Activated CD4-positive, alpha-beta memory T cell treated with anti-CD3 and anti-CD28 coated beads for 36 hours (primary cell): ENCODE measurements at regions of chr6 and their contacts with region 1.

Region 1: DNA sequence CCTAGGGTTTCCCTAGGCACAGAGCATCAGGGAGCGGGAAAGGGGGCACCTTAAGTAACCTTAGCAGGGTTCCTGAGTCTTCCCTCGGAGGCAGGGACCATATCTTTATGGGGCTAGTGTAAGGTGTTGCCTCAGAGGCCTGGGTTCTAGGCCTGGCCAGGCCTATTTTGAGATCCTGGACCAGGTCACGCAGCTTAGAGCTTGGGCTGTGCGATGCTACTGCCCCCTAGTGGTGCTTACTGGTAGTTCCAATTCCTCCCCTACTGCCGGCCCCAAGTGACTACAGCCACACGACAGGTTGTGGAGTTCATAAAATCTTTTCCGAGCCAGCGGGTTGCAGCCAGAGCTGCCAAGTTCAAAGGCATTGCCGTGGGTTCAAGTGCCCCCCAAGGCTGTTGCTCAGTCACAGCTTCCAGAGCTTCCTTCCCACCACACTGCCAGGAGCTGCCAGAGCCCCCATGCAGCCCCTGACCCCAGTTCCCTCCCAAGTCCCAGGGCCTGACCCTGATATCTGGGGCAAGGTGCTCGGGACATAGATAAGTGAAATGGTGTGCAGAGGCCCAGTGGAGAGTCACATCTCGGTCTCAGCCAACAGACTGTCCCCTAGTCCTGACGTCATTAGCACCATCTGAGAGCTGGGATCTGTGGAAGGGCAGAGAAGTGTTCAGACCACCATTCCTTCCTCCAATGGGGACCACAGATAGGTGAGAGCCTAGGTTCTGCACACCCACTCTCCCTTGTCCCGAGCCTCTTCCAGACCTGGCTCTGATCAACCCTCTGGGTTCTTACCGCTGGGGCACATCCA is 3.3 kb downstream of the LRRC73 start:
- DNase-seq: peak; percentile 87
- H3K4me3 Mint-ChIP-seq: no peak overlapping the region
- H3K27ac Mint-ChIP-seq: no peak overlapping the region
- H3K4me1 Mint-ChIP-seq: peaks cover 12% of the 10 kb centered on the region
- H3K27me3 Mint-ChIP-seq: peaks cover 17% of the 10 kb centered on the region

Region 2: GRCh38 chr6:42099340-42100028 is 1407.4 kb before region 1 on chr6:
- CTCF ChIA-PET with region 1: no interaction called
- POLR2A ChIA-PET with region 1: no interaction called
- intact Hi-C with region 1: no loop called
- DNase-seq: peak; percentile 70
- H3K4me3 Mint-ChIP-seq: peak overlapping the region; percentile 53
- H3K27ac Mint-ChIP-seq: peak overlapping the region; percentile 98
- H3K4me1 Mint-ChIP-seq: peaks cover 55% of the 10 kb centered on the region
- H3K27me3 Mint-ChIP-seq: no peaks in the 10 kb centered on the region

Region 3: GRCh38 chr6:43228951-43229802 is 277.7 kb before region 1 on chr6 and contains the start of gene DNPH1:
- CTCF ChIA-PET with region 1: interaction called, 19 read pairs
- POLR2A ChIA-PET with region 1: interaction called, 3 read pairs
- intact Hi-C with region 1: no loop called
- DNase-seq: peak; percentile 86
- H3K4me3 Mint-ChIP-seq: peak within 1 kb of the TSS; percentile 89
- H3K27ac Mint-ChIP-seq: peak within 1 kb of the TSS; percentile 82
- H3K4me1 Mint-ChIP-seq: peaks cover 42% of the 10 kb centered on the region
- H3K27me3 Mint-ChIP-seq: no peaks in the 10 kb centered on the region
- total RNA-seq, gene DNPH1: 57.5 to 57.9 TPM

Region 4: DNA sequence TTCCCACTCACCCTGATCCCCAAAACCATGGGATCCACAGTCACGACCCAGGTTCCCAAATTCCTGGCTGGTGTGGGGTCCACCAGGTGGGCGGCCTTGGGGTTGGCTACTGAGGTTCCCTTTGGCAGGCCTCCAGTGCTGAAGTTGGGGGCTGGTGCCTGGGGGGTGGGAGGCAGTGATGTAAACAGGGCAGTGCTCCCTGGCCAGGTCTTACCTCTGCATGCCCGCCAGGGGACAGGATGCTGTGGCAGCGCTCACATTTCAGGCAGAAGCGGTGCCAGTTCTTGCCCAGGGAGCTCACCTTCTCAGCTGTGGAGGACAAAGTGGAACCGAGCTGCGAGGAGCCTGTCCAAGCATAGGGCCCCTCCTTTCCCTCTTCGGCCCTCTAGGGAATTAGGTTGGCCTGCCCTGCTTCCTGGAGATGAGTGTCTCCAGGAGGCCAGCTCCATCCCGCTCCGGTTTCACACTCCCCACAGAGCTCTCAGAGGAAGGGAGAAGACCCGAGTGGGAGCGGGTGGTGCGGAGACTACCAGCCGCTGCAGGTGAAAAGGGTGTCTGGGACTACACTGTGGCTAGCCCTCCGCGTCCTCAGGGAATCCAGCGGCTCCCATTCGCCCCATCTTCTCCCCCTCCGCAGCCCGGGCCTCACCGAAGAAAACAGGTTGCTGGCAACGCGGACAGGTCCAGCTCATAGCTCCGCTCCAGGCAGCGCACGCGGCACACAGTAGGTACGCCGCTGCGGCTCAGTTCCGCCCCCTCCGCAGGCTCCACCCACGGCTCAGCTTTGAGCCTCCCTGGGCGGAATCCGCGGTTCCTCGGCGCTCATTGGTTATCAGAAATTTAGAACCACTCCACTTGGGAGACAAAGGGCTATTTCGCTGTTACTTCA is 198.5 kb before region 1 on chr6 and contains the start of gene CRIP3:
- CTCF ChIA-PET with region 1: interaction called, 24 read pairs
- POLR2A ChIA-PET with region 1: no interaction called
- intact Hi-C with region 1: no loop called
- DNase-seq: peak; percentile 68
- H3K4me3 Mint-ChIP-seq: peak within 1 kb of the TSS; percentile 79
- H3K27ac Mint-ChIP-seq: no peak within 1 kb of the TSS
- H3K4me1 Mint-ChIP-seq: peaks cover 9% of the 10 kb centered on the region
- H3K27me3 Mint-ChIP-seq: no peaks in the 10 kb centered on the region
- total RNA-seq, gene CRIP3: 2.0 to 2.9 TPM

Region 5: GRCh38 chr6:43386492-43386891 is 120.4 kb before region 1 on chr6:
- CTCF ChIA-PET with region 1: interaction called, 15 read pairs
- POLR2A ChIA-PET with region 1: no interaction called
- intact Hi-C with region 1: loop called (anchors 1 kb)
- DNase-seq: no peak
- H3K4me3 Mint-ChIP-seq: no peak overlapping the region
- H3K27ac Mint-ChIP-seq: no peak overlapping the region
- H3K4me1 Mint-ChIP-seq: peaks cover 55% of the 10 kb centered on the region
- H3K27me3 Mint-ChIP-seq: no peaks in the 10 kb centered on the region

Region 6: GRCh38 chr6:43454696-43455530 is 52.0 kb before region 1 on chr6:
- CTCF ChIA-PET with region 1: interaction called, 65 read pairs
- POLR2A ChIA-PET with region 1: interaction called, 3 read pairs
- intact Hi-C with region 1: loop called (anchors 1 kb)
- DNase-seq: peak; percentile 36
- H3K4me3 Mint-ChIP-seq: peak overlapping the region; percentile 76
- H3K27ac Mint-ChIP-seq: no peak overlapping the region
- H3K4me1 Mint-ChIP-seq: peaks cover 8% of the 10 kb centered on the region
- H3K27me3 Mint-ChIP-seq: peaks cover 9% of the 10 kb centered on the region

Region 7: DNA sequence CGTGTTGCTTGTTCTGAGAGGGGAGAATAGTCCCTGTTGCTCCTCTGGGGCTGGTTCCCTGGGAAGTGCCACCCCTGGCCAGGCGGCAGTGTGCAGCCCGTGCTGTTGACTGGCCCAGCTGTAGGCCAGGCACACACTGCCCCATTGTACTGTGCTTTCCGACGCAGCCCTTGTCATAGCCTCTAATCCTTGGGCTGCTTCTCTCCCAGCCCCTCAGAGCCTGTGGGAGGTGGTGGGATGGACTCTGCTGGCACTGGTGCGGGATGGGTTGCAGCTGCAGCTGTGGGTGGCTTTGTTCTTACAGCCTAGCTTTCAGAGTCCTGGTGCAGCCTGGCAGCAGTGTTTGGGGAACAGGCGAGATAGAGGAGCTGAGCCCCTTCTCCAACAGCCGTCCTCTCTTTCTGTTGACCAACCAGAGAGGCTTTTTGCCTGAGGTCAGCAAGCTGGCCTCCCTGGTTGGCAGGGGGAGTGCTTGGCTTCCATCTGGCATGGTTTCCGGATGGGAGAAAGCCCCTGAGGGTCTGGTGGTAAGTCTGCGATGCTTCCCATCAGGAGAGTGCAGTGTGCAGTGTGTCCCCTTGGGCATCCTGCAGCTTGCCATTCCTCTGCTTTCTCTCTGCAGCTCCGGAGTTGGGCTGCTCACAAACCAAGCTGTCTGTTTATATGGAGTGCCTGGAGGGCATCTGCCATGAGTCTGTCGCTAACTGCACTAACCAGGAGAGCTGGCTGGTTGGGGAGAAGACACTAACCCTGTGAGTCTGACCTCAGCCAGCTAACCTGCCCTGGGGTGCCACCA is 17.4 kb before region 1 on chr6:
- CTCF ChIA-PET with region 1: interaction called, 40 read pairs
- POLR2A ChIA-PET with region 1: interaction called, 3 read pairs
- intact Hi-C with region 1: no loop called
- DNase-seq: no peak
- H3K4me3 Mint-ChIP-seq: no peak overlapping the region
- H3K27ac Mint-ChIP-seq: no peak overlapping the region
- H3K4me1 Mint-ChIP-seq: peaks cover 14% of the 10 kb centered on the region
- H3K27me3 Mint-ChIP-seq: no peaks in the 10 kb centered on the region

Region 8: DNA sequence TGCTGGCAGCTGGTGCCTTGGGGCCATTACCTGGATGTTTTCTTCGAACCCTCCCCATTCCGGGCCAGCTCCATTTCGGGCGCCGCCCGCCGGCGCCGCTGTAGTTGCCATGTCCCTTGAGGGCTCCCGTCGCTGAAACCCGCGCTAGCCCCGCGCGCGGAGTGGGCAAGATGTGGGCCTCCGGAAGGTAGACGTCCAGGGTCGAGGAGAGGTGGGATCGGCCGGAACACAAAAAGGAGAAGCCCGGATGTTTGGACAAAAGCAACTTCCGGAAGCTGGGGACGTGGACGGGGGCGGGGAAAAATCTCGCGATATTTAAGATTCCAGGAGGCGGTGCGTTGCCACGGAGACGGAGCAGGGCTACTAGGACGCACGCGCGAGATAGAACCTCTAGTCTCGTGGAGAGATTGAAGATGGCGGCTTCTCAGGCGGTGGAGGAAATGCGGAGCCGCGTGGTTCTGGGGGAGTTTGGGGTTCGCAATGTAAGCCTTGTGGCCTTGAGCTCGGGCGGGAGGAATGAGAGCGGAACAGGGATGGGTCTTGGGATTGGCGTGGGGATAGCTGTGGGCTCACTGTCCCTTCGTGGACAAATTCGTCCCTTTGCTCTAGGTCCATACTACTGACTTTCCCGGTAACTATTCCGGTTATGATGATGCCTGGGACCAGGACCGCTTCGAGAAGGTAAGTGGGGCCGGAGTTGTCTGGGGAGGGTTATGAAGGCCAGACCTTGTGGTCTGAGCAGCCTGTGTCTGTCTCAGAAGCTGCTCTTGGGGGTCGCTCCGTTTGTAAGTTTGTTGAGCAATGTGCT is 10.0 kb after region 1 on chr6 and contains the starts of genes POLR1C and YIPF3:
- CTCF ChIA-PET with region 1: interaction called, 33 read pairs
- POLR2A ChIA-PET with region 1: interaction called, 6 read pairs
- intact Hi-C with region 1: no loop called
- DNase-seq: peak; percentile 99
- H3K4me3 Mint-ChIP-seq: no peak within 1 kb of the TSS
- H3K27ac Mint-ChIP-seq: no peak within 1 kb of the TSS
- H3K4me1 Mint-ChIP-seq: peaks cover 25% of the 10 kb centered on the region
- H3K27me3 Mint-ChIP-seq: no peaks in the 10 kb centered on the region
- total RNA-seq, gene POLR1C: 46.8 to 49.5 TPM
- total RNA-seq, gene YIPF3: 38.3 to 39.3 TPM